ENCODE measurements at regions of chr17 and their contacts with region 1.

Region 1: GRCh38 chr17:30116661-30117551 is at the start of gene NSRP1:
- DNase-seq: peak; percentile 85 to 96 (median 94)
- H3K4me3 ChIP-seq: peak within 1 kb of the TSS; percentile 58 to 93 (median 81)
- H3K27ac ChIP-seq: peak within 1 kb of the TSS; percentile 78 to 98 (median 94)
- H3K27me3 ChIP-seq: no peaks in the 10 kb centered on the region
- CTCF ChIP-seq: peak in 18 of 56 donors; percentile 4 to 41 (median 19)
- total RNA-seq, gene NSRP1: 23.1 to 57.8 (median 32.3) TPM

Region 2: DNA sequence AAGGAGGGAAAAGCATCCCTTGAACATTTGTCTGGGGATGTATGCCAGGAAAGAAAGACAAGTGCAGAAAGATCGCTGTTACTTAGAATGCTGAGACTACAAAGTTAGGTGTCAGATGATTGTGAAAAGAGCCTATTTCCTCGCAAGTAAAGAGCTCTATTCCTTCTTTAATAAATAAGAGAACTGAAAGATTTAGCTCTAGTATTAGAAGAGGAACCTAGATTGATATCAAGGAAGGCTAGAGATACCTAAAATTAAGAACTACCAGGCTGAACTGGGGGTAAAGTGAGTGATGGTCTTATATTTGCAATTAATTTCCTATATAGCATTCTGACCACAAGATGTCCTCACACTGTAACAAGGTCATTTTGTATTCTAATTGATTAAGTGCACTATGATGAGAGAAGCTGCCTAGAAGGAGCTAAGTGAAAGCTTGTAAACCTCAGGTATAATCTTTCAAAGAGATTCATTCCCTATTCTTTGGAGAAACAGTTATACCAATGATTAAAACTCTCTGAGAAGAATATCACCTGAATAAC is 249.2 kb before region 1 on chr17:
- intact Hi-C with region 1: no loop called
- DNase-seq: no peak
- H3K4me3 ChIP-seq: no peak overlapping the region
- H3K27ac ChIP-seq: peak overlapping the region in 35 of 59 donors; percentile 0 to 90 (median 36)
- H3K27me3 ChIP-seq: no peaks in the 10 kb centered on the region
- CTCF ChIP-seq: peak in 51 of 56 donors; percentile 13 to 71 (median 47)

Region 3: DNA sequence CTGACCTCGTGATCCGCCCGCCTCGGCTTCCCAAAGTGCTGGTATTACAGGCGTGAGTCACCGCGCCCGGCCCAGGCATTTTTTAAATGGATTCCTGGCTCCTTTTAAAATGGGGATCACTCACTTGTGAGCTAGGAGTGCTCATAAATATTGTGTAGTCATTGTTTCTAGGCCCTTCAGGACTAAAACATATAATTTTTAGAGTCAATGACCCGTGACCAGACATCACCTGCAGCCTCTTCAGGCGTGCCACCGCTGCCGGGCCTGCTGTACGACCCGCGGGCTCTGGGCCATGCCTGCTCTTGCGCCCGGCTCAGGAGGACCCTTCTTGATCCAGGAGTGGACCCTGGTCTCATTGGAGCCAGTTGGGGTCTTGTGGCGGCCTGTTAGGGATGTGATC is 144.6 kb before region 1 on chr17:
- intact Hi-C with region 1: no loop called
- DNase-seq: no peak
- H3K4me3 ChIP-seq: no peak overlapping the region
- H3K27ac ChIP-seq: no peak overlapping the region
- H3K27me3 ChIP-seq: no peaks in the 10 kb centered on the region
- CTCF ChIP-seq: no peak

Region 4: GRCh38 chr17:30278032-30278431 is 161.1 kb after region 1 on chr17:
- intact Hi-C with region 1: loop called in 1 of 2 experiments (anchors 10 kb)
- DNase-seq: peak in 1 of 10 donors; percentile 15
- H3K4me3 ChIP-seq: no peak overlapping the region
- H3K27ac ChIP-seq: no peak overlapping the region
- H3K27me3 ChIP-seq: no peaks in the 10 kb centered on the region
- CTCF ChIP-seq: peak in 46 of 56 donors; percentile 7 to 69 (median 38)

Region 5: GRCh38 chr17:30291543-30292285 is 174.8 kb after region 1 on chr17 and contains the start of gene BLMH:
- intact Hi-C with region 1: loop called in 1 of 2 experiments (anchors 10 kb)
- DNase-seq: peak; percentile 55 to 87 (median 64)
- H3K4me3 ChIP-seq: peak within 1 kb of the TSS; percentile 48 to 99 (median 92)
- H3K27ac ChIP-seq: peak within 1 kb of the TSS in 57 of 59 donors; percentile 6 to 92 (median 77)
- H3K27me3 ChIP-seq: no peaks in the 10 kb centered on the region
- CTCF ChIP-seq: peak in 16 of 56 donors; percentile 2 to 46 (median 20)
- total RNA-seq, gene BLMH: 21.8 to 42.7 (median 30.8) TPM

Region 6: GRCh38 chr17:30378824-30379302 is 262.0 kb after region 1 on chr17 and contains the start of gene CPD:
- intact Hi-C with region 1: loop called in 1 of 2 experiments (anchors 5 kb)
- DNase-seq: peak; percentile 96 to 99 (median 98)
- H3K4me3 ChIP-seq: peak within 1 kb of the TSS; percentile 71 to 100 (median 90)
- H3K27ac ChIP-seq: peak within 1 kb of the TSS; percentile 35 to 95 (median 87)
- H3K27me3 ChIP-seq: no peaks in the 10 kb centered on the region
- CTCF ChIP-seq: peak in 45 of 56 donors; percentile 7 to 88 (median 52)
- total RNA-seq, gene CPD: 45.2 to 97.3 (median 64.6) TPM